WTC11 (cell line): ENCODE measurements at regions of chr4 and their contacts with region 1.

Region 1: DNA sequence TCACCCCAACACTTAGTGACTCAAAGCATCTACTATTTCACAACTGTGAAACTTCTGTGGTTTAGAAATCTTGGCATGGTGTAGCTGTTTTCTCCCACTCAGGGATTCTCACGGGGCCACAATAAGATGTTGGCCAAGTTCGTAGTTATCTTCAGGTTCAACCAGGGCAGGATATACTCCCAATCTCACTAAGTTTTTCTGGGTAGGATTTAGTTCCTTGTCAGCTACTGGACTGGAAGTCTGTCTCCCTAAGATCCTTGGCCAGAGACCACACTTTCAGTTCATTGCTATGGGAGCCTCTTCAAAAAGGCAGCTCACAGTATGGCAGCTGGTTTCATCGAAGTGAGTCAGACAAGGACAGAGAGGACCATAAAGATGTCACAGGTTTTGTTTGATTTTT is 111.7 kb upstream of the PDHA2 start:
- DNase-seq: no peak
- ATAC-seq: no peak
- H3K4me3 Mint-ChIP-seq: no peak overlapping the region
- H3K27ac Mint-ChIP-seq: no peak overlapping the region
- H3K4me1 Mint-ChIP-seq: peaks cover 36% of the 10 kb centered on the region
- H3K27me3 Mint-ChIP-seq: no peaks in the 10 kb centered on the region
- CTCF ChIP-seq: no peak

Region 2: DNA sequence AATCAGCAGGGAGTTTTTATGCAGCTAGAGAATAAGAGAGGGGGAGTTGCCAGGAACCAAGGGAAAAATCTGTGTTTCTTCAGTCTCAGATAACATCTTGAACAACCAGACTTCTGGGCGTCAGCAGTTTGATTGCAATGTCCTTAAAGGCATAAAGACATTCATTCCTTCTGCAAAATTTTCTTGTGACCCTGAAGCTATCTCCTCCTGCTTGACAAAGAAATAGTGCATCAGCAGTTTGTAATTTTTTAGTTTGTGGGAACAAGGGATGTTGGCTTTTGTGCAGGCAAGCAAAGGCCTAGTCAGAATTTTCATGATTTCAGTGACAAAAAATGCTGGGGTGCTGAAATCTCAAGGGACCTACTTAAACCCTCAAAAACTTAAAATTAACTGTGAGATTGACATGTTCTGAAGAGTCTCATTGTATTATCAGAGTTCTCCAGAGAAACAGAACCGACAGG is 53.6 kb before region 1 on chr4:
- CTCF ChIA-PET with region 1: no interaction called
- POLR2A ChIA-PET with region 1: no interaction called
- DNase-seq: no peak
- ATAC-seq: no peak
- H3K4me3 Mint-ChIP-seq: no peak overlapping the region
- H3K27ac Mint-ChIP-seq: no peak overlapping the region
- H3K4me1 Mint-ChIP-seq: peaks cover 10% of the 10 kb centered on the region
- H3K27me3 Mint-ChIP-seq: no peaks in the 10 kb centered on the region
- CTCF ChIP-seq: no peak

Region 3: GRCh38 chr4:95887551-95887950 is 159.4 kb after region 1 on chr4:
- CTCF ChIA-PET with region 1: no interaction called
- POLR2A ChIA-PET with region 1: no interaction called
- DNase-seq: no peak
- ATAC-seq: no peak
- H3K4me3 Mint-ChIP-seq: no peak overlapping the region
- H3K27ac Mint-ChIP-seq: no peak overlapping the region
- H3K4me1 Mint-ChIP-seq: no peaks in the 10 kb centered on the region
- H3K27me3 Mint-ChIP-seq: no peaks in the 10 kb centered on the region
- CTCF ChIP-seq: no peak

Region 4: DNA sequence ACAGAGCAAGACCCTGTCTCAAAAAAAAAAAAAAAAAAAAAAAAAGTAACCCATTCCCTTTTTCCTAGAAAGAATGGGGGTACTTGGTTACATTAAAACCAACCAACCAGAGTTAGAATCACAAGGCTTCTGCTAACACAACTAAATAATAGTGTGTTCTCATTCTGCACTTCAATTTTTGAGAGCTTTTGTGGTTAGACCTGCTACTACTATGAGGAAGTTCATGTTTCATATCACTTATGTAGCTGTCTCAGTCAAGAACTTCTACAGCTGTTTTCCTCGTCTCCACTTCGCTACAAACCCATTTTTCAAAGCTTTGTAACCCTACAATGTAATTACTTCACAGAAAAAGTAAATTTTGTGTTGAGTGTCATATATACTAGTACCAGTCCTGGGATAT is 170.1 kb after region 1 on chr4:
- CTCF ChIA-PET with region 1: no interaction called
- POLR2A ChIA-PET with region 1: interaction called, 11 read pairs
- DNase-seq: no peak
- ATAC-seq: no peak
- H3K4me3 Mint-ChIP-seq: no peak overlapping the region
- H3K27ac Mint-ChIP-seq: no peak overlapping the region
- H3K4me1 Mint-ChIP-seq: peaks cover 12% of the 10 kb centered on the region
- H3K27me3 Mint-ChIP-seq: no peaks in the 10 kb centered on the region
- CTCF ChIP-seq: no peak